Activated T-helper 1 cell treated with anti-CD3 and anti-CD28 coated beads, Interleukin-12 subunit alpha, Interleukin-12 subunit beta, Interleukin-2, Interleukin-4 antibody, amounts not matched to agents 30 ng/mL and 10 ng/mL and 1 ng/mL, durations not matched to agents 14 hours and 24 hours and 36 hours (primary cell): ENCODE measurements at regions of chr1 and their contacts with region 1.

Region 1: GRCh38 chr1:109910123-109910962 is at the start of gene CSF1:
- DNase-seq: peak; percentile 60
- H3K4me3 Mint-ChIP-seq: peak within 1 kb of the TSS; percentile 97
- H3K27ac Mint-ChIP-seq: peak within 1 kb of the TSS; percentile 95
- H3K4me1 Mint-ChIP-seq: peaks cover 84% of the 10 kb centered on the region
- H3K27me3 Mint-ChIP-seq: no peaks in the 10 kb centered on the region
- total RNA-seq, gene CSF1: 269 and 275 TPM in 2 replicates

Region 2: DNA sequence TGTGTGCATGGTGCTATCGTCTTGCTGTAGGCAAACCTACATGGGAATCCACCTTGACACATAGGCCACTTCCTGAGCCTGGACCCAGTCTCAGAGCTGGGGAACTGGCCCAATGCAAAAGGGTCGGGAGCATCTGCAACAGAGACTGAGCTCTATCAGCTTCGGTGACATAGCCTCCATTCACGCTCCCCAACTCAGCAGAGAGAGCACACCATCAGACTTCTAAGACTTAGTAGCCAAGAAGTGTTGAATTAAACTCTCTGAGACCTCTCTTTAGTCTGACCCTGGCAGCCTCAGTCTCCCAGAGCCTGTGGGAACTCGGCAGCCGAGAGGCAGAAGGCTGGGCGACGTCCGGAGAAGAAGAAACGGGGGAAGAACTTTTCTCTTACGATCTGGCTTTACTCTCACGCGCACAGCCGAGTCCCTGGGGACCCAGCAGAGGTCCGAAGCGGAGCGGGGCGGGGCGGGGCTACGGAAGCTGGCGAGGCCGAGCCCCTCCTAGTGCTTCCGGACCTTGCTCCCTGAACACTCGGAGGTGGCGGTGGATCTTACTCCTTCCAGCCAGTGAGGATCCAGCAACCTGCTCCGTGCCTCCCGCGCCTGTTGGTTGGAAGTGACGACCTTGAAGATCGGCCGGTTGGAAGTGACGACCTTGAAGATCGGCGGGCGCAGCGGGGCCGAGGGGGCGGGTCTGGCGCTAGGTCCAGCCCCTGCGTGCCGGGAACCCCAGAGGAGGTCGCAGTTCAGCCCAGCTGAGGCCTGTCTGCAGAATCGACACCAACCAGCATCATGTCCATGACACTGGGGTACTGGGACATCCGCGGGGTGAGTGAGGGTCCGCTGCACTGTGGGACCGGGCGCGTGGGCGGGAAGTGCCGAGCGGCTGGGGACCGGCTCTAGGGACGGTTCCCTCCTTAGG is 254.5 kb before region 1 on chr1 and contains the start of gene GSTM4:
- intact Hi-C with region 1: no loop called
- DNase-seq: peak; percentile 56
- H3K4me3 Mint-ChIP-seq: peak within 1 kb of the TSS; percentile 95
- H3K27ac Mint-ChIP-seq: peak within 1 kb of the TSS; percentile 92
- H3K4me1 Mint-ChIP-seq: peaks cover 15% of the 10 kb centered on the region
- H3K27me3 Mint-ChIP-seq: peaks cover 19% of the 10 kb centered on the region
- total RNA-seq, gene GSTM4: 6.5 and 8.9 TPM in 2 replicates

Region 3: GRCh38 chr1:109773146-109773899 is 137.0 kb before region 1 on chr1:
- intact Hi-C with region 1: loop called (anchors 1 kb)
- DNase-seq: peak; percentile 65
- H3K4me3 Mint-ChIP-seq: no peak overlapping the region
- H3K27ac Mint-ChIP-seq: peak overlapping the region; percentile 15
- H3K4me1 Mint-ChIP-seq: peaks cover 23% of the 10 kb centered on the region
- H3K27me3 Mint-ChIP-seq: peaks cover 9% of the 10 kb centered on the region

Region 4: DNA sequence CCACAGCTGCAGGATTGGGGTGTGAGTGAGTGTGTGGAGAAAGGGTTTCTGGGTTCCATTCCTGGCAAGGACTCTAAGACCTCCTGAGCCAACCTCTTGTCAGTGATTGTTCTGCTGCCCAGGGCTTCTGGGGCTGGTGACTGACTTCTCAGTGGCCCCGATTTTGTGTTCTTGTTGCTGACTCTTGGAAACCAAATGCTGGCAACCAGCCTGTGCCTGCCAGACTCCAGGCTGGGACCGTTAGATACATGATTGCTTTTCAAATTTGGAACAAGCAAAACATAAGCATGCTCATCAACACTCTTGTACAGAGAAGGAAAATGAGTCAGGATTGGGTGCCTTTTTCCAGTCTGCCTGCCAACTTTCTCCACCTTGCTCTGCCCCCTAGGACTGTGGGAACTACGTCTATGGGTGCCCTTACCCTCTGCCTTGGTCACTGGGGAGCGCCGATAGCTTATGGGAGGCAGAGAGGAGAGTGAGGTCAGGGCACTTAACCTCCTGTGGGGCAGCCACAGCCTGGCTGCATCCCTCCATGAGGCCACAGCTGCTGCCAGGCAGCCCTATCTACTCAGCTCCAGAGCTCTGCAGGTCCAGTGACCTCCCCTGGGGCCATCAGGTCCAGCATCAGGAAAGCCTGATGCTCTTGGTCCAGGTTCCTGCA is 107.3 kb before region 1 on chr1:
- intact Hi-C with region 1: loop called (anchors 2 kb)
- DNase-seq: no peak
- H3K4me3 Mint-ChIP-seq: peak overlapping the region; percentile 72
- H3K27ac Mint-ChIP-seq: peak overlapping the region; percentile 96
- H3K4me1 Mint-ChIP-seq: peaks cover 87% of the 10 kb centered on the region
- H3K27me3 Mint-ChIP-seq: no peaks in the 10 kb centered on the region

Region 5: DNA sequence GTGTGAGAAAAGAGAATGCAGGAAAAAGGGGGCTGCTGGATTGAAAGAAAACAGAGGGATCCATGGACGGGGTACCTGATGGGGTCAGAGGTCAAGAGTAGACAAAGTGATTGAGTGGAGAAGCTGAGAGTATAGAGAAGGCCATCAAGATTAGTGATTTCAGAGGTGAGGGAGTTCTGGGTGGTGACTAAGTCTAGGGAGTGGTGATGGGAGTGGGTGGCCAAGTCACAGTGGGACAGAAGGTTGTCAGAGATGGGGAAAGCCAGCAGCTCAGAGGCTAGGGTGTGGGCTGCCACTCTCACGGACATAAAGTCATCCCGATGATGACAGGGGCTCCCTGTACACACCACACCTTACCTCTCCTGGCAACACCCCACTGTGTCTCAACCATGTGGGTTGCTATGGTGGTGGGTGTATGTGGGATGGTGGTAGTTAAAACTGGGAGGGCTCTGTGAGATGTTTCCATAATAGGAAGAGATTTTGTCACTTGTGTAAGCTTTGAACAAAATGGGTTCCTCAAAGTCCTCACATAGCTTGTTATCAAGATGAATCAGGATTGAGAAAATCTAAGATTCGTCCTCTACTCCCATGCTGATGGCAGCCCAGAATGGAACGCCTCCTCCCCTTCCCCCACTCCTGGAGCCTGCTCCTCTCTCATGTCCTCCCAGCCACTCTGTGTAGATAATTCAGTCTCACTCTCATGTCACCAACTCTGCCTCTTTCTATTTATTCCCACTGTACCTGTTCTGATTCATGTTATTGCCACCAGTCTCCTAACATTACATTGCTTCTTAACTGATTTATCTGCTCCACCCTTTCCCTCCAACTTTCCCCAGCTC is 20.0 kb before region 1 on chr1:
- intact Hi-C with region 1: loop called (anchors 1 kb)
- DNase-seq: no peak
- H3K4me3 Mint-ChIP-seq: peak overlapping the region; percentile 34
- H3K27ac Mint-ChIP-seq: peak overlapping the region; percentile 85
- H3K4me1 Mint-ChIP-seq: peaks cover 13% of the 10 kb centered on the region
- H3K27me3 Mint-ChIP-seq: no peaks in the 10 kb centered on the region

Region 6: DNA sequence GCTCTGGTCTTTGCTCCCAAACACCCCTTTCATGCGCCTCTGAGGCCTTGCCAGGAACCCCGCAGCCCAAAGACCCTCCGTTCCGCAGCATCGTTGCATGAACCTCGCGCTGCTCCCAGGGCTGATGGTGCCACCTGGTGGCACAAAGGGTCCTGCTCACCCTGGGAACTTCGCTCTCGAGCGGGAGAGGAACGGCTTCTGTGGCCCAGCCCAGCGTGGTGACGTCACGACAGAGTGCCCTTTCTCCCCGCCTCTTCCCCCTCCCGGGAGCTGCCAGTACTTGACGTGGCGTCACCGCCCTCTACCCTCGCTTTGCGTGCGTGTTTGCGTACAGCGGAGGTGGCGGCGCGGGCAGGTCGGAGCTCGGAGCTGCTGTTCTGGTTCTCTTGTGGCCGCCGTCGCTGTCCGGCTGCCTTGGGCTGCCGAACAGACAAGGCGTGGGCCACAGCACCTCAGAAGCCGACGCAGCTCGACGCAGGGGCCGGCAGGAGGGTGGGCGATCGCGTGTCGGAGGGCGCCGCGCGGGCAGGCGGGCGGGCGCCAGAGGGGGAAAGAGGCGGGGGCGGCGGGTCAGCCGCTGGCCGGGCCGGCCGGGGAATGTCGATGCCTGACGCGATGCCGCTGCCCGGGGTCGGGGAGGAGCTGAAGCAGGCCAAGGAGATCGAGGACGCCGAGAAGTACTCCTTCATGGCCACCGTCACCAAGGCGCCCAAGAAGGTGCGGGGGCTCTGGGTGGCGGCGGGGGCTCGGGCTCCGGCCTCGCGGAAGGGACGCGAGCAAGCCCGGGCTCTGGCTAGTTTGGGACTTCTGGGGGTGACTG is 74.3 kb after region 1 on chr1 and contains the start of gene AHCYL1:
- intact Hi-C with region 1: loop called (anchors 1 kb)
- DNase-seq: peak; percentile 99
- H3K4me3 Mint-ChIP-seq: peak within 1 kb of the TSS; percentile 93
- H3K27ac Mint-ChIP-seq: peak within 1 kb of the TSS; percentile 97
- H3K4me1 Mint-ChIP-seq: peaks cover 36% of the 10 kb centered on the region
- H3K27me3 Mint-ChIP-seq: peaks cover 4% of the 10 kb centered on the region
- total RNA-seq, gene AHCYL1: 63.8 and 64.1 TPM in 2 replicates